Common myeloid progenitor, CD34-positive (primary cell): ENCODE measurements at regions of chr10 and their contacts with region 1.

Region 1: DNA sequence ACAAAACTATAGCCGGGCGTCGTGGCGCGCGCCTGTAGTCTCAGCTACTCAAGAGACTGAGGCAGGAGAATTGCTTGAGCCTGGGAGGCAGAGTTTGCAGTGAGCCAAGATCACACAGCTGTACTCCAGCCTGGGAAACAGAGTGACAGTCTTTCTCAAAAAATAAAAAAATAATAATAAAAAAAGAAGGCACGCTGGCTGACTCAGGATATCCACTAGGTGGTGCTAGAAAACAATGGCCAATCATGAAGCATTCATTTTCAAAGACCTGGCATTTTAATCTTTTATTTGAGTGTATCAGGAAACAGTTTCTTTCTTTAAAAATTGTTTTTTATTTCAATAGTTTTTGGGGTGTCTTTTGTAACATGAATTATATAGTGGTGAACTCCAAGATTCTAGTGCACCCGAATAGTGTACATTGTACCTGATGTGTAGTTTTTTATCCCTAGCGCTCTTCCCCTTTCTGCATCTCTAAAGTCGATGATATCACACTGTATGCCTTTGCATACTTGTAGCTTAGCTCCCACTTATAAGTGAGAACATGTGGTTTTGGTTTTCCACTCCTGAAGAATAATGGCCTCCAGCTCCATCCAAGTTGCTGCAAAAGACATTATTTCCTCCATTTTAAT is 88.6 kb downstream of the LYZL1 start:
- DNase-seq: peak; percentile 25 to 61 (median 55)
- H3K4me3 ChIP-seq: no peak overlapping the region
- H3K27ac ChIP-seq: no peak overlapping the region
- H3K4me1 ChIP-seq: no peaks in the 10 kb centered on the region
- H3K27me3 ChIP-seq: no peaks in the 10 kb centered on the region

Region 2: GRCh38 chr10:29392376-29393021 is 15.1 kb after region 1 on chr10:
- CTCF ChIA-PET with region 1: interaction called, 14 read pairs
- POLR2A ChIA-PET with region 1: no interaction called
- DNase-seq: peak; percentile 25 to 41 (median 32)
- H3K4me3 ChIP-seq: no peak overlapping the region
- H3K27ac ChIP-seq: no peak overlapping the region
- H3K4me1 ChIP-seq: no peaks in the 10 kb centered on the region
- H3K27me3 ChIP-seq: no peaks in the 10 kb centered on the region